ENCODE measurements at regions of chr13 and their contacts with region 1.

Region 1: DNA sequence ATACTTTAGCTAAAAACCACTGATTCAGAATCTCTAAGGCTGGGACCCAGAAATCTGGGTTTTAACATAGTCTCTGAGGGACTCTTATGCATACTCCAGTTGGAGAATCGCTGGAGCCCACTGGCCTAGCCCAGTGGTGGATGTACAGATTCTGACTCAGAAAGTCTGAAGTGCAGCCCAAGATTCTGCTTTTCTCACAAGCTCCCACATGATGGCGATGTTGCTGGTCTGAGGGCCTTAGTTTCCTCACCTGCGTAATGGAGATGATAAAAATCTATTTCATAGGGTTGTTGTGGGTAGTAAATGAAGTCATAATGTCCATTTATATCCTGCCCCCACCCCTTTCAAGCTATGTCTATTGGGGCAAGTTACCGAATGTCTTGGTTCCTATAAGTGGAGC is 7.7 kb upstream of the CDADC1 start:
- DNase-seq: peak; percentile 68
- ATAC-seq: peak; percentile 98
- H3K4me3 Mint-ChIP-seq: no peak overlapping the region
- H3K27ac Mint-ChIP-seq: no peak overlapping the region
- H3K4me1 Mint-ChIP-seq: peaks cover 2% of the 10 kb centered on the region
- H3K27me3 Mint-ChIP-seq: no peaks in the 10 kb centered on the region
- CTCF ChIP-seq: peak; percentile 67

Region 2: DNA sequence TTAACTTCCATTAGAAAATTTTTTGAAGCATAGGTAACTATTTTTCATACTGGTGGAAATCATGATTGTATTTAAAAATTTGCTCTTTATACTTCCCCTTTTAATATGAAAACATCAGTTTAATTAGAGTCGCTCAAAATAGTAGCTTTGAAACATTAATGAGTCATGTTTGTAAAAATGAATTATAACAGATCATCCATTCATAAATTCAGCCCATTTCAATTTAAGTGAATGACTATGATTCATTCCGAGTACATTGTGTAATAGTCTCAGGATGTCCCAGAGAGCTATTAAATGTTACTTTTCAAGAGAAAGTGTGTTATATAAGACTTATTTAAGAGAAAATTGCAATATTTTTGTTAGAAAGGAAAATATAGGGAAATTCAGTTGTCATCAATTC is 153.3 kb before region 1 on chr13:
- CTCF ChIA-PET with region 1: no interaction called
- POLR2A ChIA-PET with region 1: no interaction called
- intact Hi-C with region 1: no loop called
- DNase-seq: no peak
- ATAC-seq: no peak
- H3K4me3 Mint-ChIP-seq: no peak overlapping the region
- H3K27ac Mint-ChIP-seq: no peak overlapping the region
- H3K4me1 Mint-ChIP-seq: peaks cover 1% of the 10 kb centered on the region
- H3K27me3 Mint-ChIP-seq: no peaks in the 10 kb centered on the region
- CTCF ChIP-seq: no peak

Region 3: GRCh38 chr13:49225223-49226090 is 14.6 kb before region 1 on chr13:
- CTCF ChIA-PET with region 1: interaction called, 11 read pairs
- POLR2A ChIA-PET with region 1: interaction called, 5 read pairs
- intact Hi-C with region 1: no loop called
- DNase-seq: no peak
- ATAC-seq: no peak
- H3K4me3 Mint-ChIP-seq: no peak overlapping the region
- H3K27ac Mint-ChIP-seq: no peak overlapping the region
- H3K4me1 Mint-ChIP-seq: peaks cover 2% of the 10 kb centered on the region
- H3K27me3 Mint-ChIP-seq: peaks cover 32% of the 10 kb centered on the region
- CTCF ChIP-seq: no peak

Region 4: GRCh38 chr13:49457221-49457620 is 217.2 kb after region 1 on chr13:
- CTCF ChIA-PET with region 1: no interaction called
- POLR2A ChIA-PET with region 1: no interaction called
- intact Hi-C with region 1: no loop called
- DNase-seq: no peak
- ATAC-seq: no peak
- H3K4me3 Mint-ChIP-seq: no peak overlapping the region
- H3K27ac Mint-ChIP-seq: no peak overlapping the region
- H3K4me1 Mint-ChIP-seq: peaks cover 23% of the 10 kb centered on the region
- H3K27me3 Mint-ChIP-seq: no peaks in the 10 kb centered on the region
- CTCF ChIP-seq: no peak